OCI-LY7 (cell line): ENCODE measurements at regions of chr2 and their contacts with region 1.

Region 1: DNA sequence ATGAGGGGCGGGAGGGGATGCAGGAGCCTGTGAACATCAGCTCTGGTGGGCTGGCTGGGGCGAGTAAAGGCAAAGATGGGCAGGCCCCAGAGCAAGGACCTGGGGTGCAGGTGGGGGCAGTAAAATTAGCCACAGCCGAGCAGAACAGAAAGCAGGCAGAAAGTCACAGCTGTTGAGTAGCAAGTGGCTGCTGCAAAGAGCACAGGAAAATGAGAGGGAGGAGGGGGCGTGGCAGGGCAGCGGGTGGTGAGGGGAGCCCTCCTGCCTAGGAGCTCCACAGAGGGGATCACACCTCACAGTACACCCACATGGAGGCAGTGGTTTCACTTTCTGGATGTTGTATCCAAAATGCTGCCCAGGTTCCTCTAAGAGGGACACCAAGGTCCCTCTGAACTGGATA is 79.6 kb downstream of the LBH start:
- DNase-seq: peak; percentile 82
- H3K4me3 ChIP-seq: peak overlapping the region; percentile 10
- H3K27ac ChIP-seq: peak overlapping the region; percentile 57
- H3K4me1 ChIP-seq: peaks cover 26% of the 10 kb centered on the region
- CTCF ChIP-seq: no peak

Region 2: DNA sequence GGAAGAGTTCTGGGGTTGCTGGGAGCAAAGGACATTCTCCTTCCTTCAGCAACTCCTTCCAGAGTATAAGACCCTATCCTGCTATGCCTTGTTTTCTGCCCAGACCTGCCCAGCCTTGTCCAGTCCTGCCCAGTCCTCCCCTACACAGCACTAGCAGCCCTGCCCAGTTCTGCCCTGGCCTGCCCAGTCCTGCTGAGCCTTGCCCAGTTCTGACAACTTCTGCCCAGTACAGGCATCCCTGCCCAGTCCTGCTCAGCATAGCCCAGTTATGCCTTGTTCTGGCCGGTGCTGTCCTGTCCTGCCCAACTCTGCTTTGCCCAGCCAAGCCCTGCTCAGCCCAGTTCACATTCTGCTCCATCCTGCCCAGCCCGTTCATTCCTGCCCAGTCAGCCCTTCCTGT is 344.7 kb before region 1 on chr2:
- CTCF ChIA-PET with region 1: no interaction called
- POLR2A ChIA-PET with region 1: no interaction called
- intact Hi-C with region 1: no loop called
- DNase-seq: no peak
- H3K4me3 ChIP-seq: no peak overlapping the region
- H3K27ac ChIP-seq: no peak overlapping the region
- H3K4me1 ChIP-seq: no peaks in the 10 kb centered on the region
- CTCF ChIP-seq: no peak

Region 3: GRCh38 chr2:30266051-30266621 is 44.8 kb before region 1 on chr2:
- CTCF ChIA-PET with region 1: no interaction called
- POLR2A ChIA-PET with region 1: interaction called, 10 read pairs
- intact Hi-C with region 1: no loop called
- DNase-seq: peak; percentile 67
- H3K4me3 ChIP-seq: no peak overlapping the region
- H3K27ac ChIP-seq: no peak overlapping the region
- H3K4me1 ChIP-seq: peaks cover 22% of the 10 kb centered on the region
- CTCF ChIP-seq: no peak

Region 4: GRCh38 chr2:30287857-30288513 is 23.0 kb before region 1 on chr2:
- CTCF ChIA-PET with region 1: interaction called, 3 read pairs
- POLR2A ChIA-PET with region 1: interaction called, 22 read pairs
- intact Hi-C with region 1: loop called (anchors 1 kb)
- DNase-seq: peak; percentile 70
- H3K4me3 ChIP-seq: peak overlapping the region; percentile 45
- H3K27ac ChIP-seq: peak overlapping the region; percentile 76
- H3K4me1 ChIP-seq: peaks cover 33% of the 10 kb centered on the region
- CTCF ChIP-seq: no peak

Region 5: GRCh38 chr2:30293303-30293921 is 17.5 kb before region 1 on chr2:
- CTCF ChIA-PET with region 1: interaction called, 3 read pairs
- POLR2A ChIA-PET with region 1: interaction called, 22 read pairs
- intact Hi-C with region 1: no loop called
- DNase-seq: no peak
- H3K4me3 ChIP-seq: no peak overlapping the region
- H3K27ac ChIP-seq: no peak overlapping the region
- H3K4me1 ChIP-seq: peaks cover 22% of the 10 kb centered on the region
- CTCF ChIP-seq: no peak

Region 6: GRCh38 chr2:30300456-30301221 is 10.3 kb before region 1 on chr2:
- CTCF ChIA-PET with region 1: interaction called, 5 read pairs
- POLR2A ChIA-PET with region 1: interaction called, 11 read pairs
- intact Hi-C with region 1: no loop called
- DNase-seq: no peak
- H3K4me3 ChIP-seq: no peak overlapping the region
- H3K27ac ChIP-seq: no peak overlapping the region
- H3K4me1 ChIP-seq: peaks cover 7% of the 10 kb centered on the region
- CTCF ChIP-seq: no peak